Activated T-helper 1 cell treated with anti-CD3 and anti-CD28 coated beads, Interleukin-12 subunit alpha, Interleukin-12 subunit beta, Interleukin-2, Interleukin-4 antibody, amounts not matched to agents 30 ng/mL and 10 ng/mL and 1 ng/mL, durations not matched to agents 14 hours and 24 hours and 36 hours (primary cell): ENCODE measurements at regions of chr18 and their contacts with region 1.

Region 1: GRCh38 chr18:23837591-23837990 is 148.3 kb downstream of the LAMA3 start:
- DNase-seq: no peak
- H3K4me3 Mint-ChIP-seq: no peak overlapping the region
- H3K27ac Mint-ChIP-seq: no peak overlapping the region
- H3K4me1 Mint-ChIP-seq: peaks cover 7% of the 10 kb centered on the region
- H3K27me3 Mint-ChIP-seq: peaks cover 2% of the 10 kb centered on the region

Region 2: GRCh38 chr18:23884681-23885375 is 47.2 kb after region 1 on chr18:
- intact Hi-C with region 1: loop called (anchors 5 kb)
- DNase-seq: no peak
- H3K4me3 Mint-ChIP-seq: no peak overlapping the region
- H3K27ac Mint-ChIP-seq: no peak overlapping the region
- H3K4me1 Mint-ChIP-seq: peaks cover 23% of the 10 kb centered on the region
- H3K27me3 Mint-ChIP-seq: peaks cover 4% of the 10 kb centered on the region

Region 3: GRCh38 chr18:23967321-23968089 is 129.9 kb after region 1 on chr18:
- intact Hi-C with region 1: no loop called
- DNase-seq: no peak
- H3K4me3 Mint-ChIP-seq: no peak overlapping the region
- H3K27ac Mint-ChIP-seq: no peak overlapping the region
- H3K4me1 Mint-ChIP-seq: peaks cover 64% of the 10 kb centered on the region
- H3K27me3 Mint-ChIP-seq: peaks cover 2% of the 10 kb centered on the region